ENCODE measurements at regions of chr3 and their contacts with region 1.

Region 1: GRCh38 chr3:71069797-71070196 is 513.7 kb downstream of the FOXP1 start:
- DNase-seq: peak; percentile 88
- ATAC-seq: peak; percentile 43
- H3K4me3 Mint-ChIP-seq: peak overlapping the region; percentile 9
- H3K27ac Mint-ChIP-seq: peak overlapping the region; percentile 79
- H3K4me1 Mint-ChIP-seq: peaks cover 86% of the 10 kb centered on the region
- H3K27me3 Mint-ChIP-seq: no peaks in the 10 kb centered on the region
- CTCF ChIP-seq: peak; percentile 51

Region 2: GRCh38 chr3:71031914-71032521 is 37.8 kb before region 1 on chr3:
- CTCF ChIA-PET with region 1: no interaction called
- POLR2A ChIA-PET with region 1: no interaction called
- intact Hi-C with region 1: no loop called
- DNase-seq: no peak
- ATAC-seq: peak; percentile 43
- H3K4me3 Mint-ChIP-seq: no peak overlapping the region
- H3K27ac Mint-ChIP-seq: peak overlapping the region; percentile 91
- H3K4me1 Mint-ChIP-seq: peaks cover 82% of the 10 kb centered on the region
- H3K27me3 Mint-ChIP-seq: no peaks in the 10 kb centered on the region
- CTCF ChIP-seq: no peak

Region 3: GRCh38 chr3:71080517-71081083 is 10.8 kb after region 1 on chr3:
- CTCF ChIA-PET with region 1: interaction called, 18 read pairs
- POLR2A ChIA-PET with region 1: interaction called, 17 read pairs
- intact Hi-C with region 1: loop called (anchors 2 kb)
- DNase-seq: no peak
- ATAC-seq: peak; percentile 28
- H3K4me3 Mint-ChIP-seq: peak overlapping the region; percentile 46
- H3K27ac Mint-ChIP-seq: peak overlapping the region; percentile 76
- H3K4me1 Mint-ChIP-seq: peaks cover 92% of the 10 kb centered on the region
- H3K27me3 Mint-ChIP-seq: no peaks in the 10 kb centered on the region
- CTCF ChIP-seq: no peak

Region 4: DNA sequence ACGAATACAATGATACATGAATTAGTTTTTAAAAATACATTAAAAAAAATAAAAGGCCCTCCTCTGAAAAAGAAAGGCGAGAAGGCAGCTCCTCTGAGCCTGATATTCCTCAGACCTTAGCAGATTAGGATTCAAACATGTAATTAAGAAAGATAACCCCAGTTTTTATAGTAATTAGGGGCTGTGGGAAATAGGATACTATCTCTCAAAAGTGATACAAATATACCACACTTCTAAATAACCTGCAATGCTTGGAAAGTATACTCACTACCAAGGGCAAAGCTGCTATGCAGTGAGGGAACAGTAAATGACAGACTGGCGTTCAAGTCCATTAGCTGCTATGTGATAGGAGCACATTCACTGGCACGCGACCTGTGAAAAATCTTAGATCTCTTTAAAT is 68.6 kb after region 1 on chr3:
- CTCF ChIA-PET with region 1: no interaction called
- POLR2A ChIA-PET with region 1: no interaction called
- intact Hi-C with region 1: no loop called
- DNase-seq: no peak
- ATAC-seq: no peak
- H3K4me3 Mint-ChIP-seq: no peak overlapping the region
- H3K27ac Mint-ChIP-seq: no peak overlapping the region
- H3K4me1 Mint-ChIP-seq: peaks cover 70% of the 10 kb centered on the region
- H3K27me3 Mint-ChIP-seq: no peaks in the 10 kb centered on the region
- CTCF ChIP-seq: no peak

Region 5: GRCh38 chr3:71185733-71186455 is 116.1 kb after region 1 on chr3:
- CTCF ChIA-PET with region 1: no interaction called
- POLR2A ChIA-PET with region 1: no interaction called
- intact Hi-C with region 1: no loop called
- DNase-seq: peak; percentile 51
- ATAC-seq: peak; percentile 76
- H3K4me3 Mint-ChIP-seq: no peak overlapping the region
- H3K27ac Mint-ChIP-seq: peak overlapping the region; percentile 81
- H3K4me1 Mint-ChIP-seq: peaks cover 59% of the 10 kb centered on the region
- H3K27me3 Mint-ChIP-seq: no peaks in the 10 kb centered on the region
- CTCF ChIP-seq: no peak

Measured in activated CD8-positive, alpha-beta T cell treated with anti-CD3 and anti-CD28 coated beads for 36 hours (primary cell).